PC-3 (cell line): ENCODE measurements at regions of chrX and their contacts with region 1.

Region 1: GRCh38 chrX:56729152-56729850 is at the start of gene NBDY:
- DNase-seq: peak; percentile 50
- ATAC-seq: peak; percentile 87
- H3K4me3 ChIP-seq: peak within 1 kb of the TSS; percentile 87
- H3K27ac ChIP-seq: peak within 1 kb of the TSS; percentile 45
- H3K4me1 ChIP-seq: peaks cover 5% of the 10 kb centered on the region; the same call in 1 of the 2 replicates
- H3K27me3 ChIP-seq: no peaks in the 10 kb centered on the region
- CTCF ChIP-seq: no peak
- total RNA-seq, gene NBDY: 9.7 and 13.6 TPM in 2 replicates

Region 2: GRCh38 chrX:55120767-55121358 is 1608.4 kb before region 1 on chrX:
- CTCF ChIA-PET with region 1: no interaction called
- POLR2A ChIA-PET with region 1: interaction called, 10 read pairs
- intact Hi-C with region 1: no loop called
- DNase-seq: no peak
- ATAC-seq: no peak
- H3K4me3 ChIP-seq: no peak overlapping the region
- H3K27ac ChIP-seq: no peak overlapping the region
- H3K4me1 ChIP-seq: no peaks in the 10 kb centered on the region
- H3K27me3 ChIP-seq: peaks cover 12% of the 10 kb centered on the region; the same call in 1 of the 2 replicates
- CTCF ChIP-seq: no peak

Region 3: DNA sequence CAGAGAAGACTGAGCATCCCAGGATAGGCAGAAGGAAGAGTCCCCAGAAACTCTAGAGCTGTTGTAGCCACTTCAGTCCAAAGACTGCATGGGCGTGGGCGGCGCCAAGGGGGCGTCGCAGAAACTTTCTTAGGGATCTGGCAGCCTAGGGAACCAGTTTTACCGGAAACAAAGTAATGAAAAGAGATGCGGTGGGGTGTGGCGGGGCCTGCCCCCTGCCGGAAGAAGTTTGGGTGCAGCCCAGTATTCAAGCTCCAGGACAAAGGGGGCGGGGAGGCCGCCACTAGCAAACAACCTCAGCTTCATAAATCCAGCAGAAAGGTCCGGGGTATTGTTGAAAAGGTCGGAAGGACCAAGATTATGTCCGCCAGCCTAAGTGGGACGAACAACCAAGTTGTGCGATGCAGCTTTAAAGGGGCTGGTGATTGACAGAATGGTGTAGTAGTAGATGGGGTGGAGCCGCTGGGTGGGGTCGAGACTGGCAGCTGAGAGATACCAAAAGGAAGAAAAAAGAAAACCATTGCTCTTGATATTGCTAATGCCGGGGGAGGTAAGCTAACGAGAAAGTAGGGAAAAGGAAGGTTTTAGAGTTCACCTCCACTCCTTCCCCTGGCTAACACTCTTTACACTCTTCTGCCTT is 821.2 kb before region 1 on chrX:
- CTCF ChIA-PET with region 1: no interaction called
- POLR2A ChIA-PET with region 1: no interaction called
- intact Hi-C with region 1: loop called (anchors 5 kb)
- DNase-seq: peak; percentile 77
- ATAC-seq: peak; percentile 66
- H3K4me3 ChIP-seq: peak overlapping the region; percentile 86
- H3K27ac ChIP-seq: peak overlapping the region; percentile 27
- H3K4me1 ChIP-seq: peaks cover 7% of the 10 kb centered on the region
- H3K27me3 ChIP-seq: no peaks in the 10 kb centered on the region
- CTCF ChIP-seq: peak; percentile 60

Region 4: GRCh38 chrX:56281789-56282188 is 447.5 kb before region 1 on chrX:
- CTCF ChIA-PET with region 1: interaction called, 13 read pairs
- POLR2A ChIA-PET with region 1: interaction called, 4 read pairs
- intact Hi-C with region 1: loop called (anchors 1 kb)
- DNase-seq: peak; percentile 54
- ATAC-seq: peak; percentile 57
- H3K4me3 ChIP-seq: no peak overlapping the region
- H3K27ac ChIP-seq: no peak overlapping the region
- H3K4me1 ChIP-seq: no peaks in the 10 kb centered on the region
- H3K27me3 ChIP-seq: peaks cover 14% of the 10 kb centered on the region; the same call in 1 of the 2 replicates
- CTCF ChIP-seq: peak; percentile 64

Region 5: GRCh38 chrX:56503941-56504662 is 225.2 kb before region 1 on chrX:
- CTCF ChIA-PET with region 1: no interaction called
- POLR2A ChIA-PET with region 1: interaction called, 4 read pairs
- intact Hi-C with region 1: loop called (anchors 10 kb)
- DNase-seq: peak; percentile 85
- ATAC-seq: peak; percentile 79
- H3K4me3 ChIP-seq: peak overlapping the region; percentile 23; the same call in 1 of the 2 replicates
- H3K27ac ChIP-seq: peak overlapping the region; percentile 98
- H3K4me1 ChIP-seq: peaks cover 50% of the 10 kb centered on the region
- H3K27me3 ChIP-seq: no peaks in the 10 kb centered on the region
- CTCF ChIP-seq: peak; percentile 44; the same call in 1 of the 2 replicates

Region 6: GRCh38 chrX:56788717-56789122 is 59.4 kb after region 1 on chrX:
- CTCF ChIA-PET with region 1: no interaction called
- POLR2A ChIA-PET with region 1: no interaction called
- intact Hi-C with region 1: no loop called
- DNase-seq: no peak
- ATAC-seq: no peak
- H3K4me3 ChIP-seq: no peak overlapping the region
- H3K27ac ChIP-seq: no peak overlapping the region
- H3K4me1 ChIP-seq: no peaks in the 10 kb centered on the region; the same call in 1 of the 2 replicates
- H3K27me3 ChIP-seq: no peaks in the 10 kb centered on the region
- CTCF ChIP-seq: no peak

Region 7: DNA sequence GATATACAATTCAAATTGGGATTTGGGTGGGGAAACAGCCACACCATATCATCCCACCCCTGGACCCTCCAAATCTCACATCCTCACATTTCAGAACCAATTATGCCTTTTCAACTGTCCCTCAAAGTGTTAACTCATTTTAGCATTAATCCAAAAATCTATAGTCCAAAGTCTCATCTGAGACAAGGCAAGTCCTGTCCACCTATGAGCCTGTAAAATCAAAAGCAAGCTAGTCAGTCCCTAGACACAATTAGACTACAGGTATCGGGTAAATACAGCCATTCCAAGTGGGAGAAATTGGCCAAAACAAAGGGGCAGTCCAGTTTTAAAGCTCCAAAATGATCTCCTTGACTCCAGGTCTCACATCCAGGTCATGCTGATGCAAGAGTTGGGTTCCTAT is 127.7 kb after region 1 on chrX:
- CTCF ChIA-PET with region 1: no interaction called
- POLR2A ChIA-PET with region 1: no interaction called
- intact Hi-C with region 1: no loop called
- DNase-seq: no peak
- ATAC-seq: no peak
- H3K4me3 ChIP-seq: no peak overlapping the region
- H3K27ac ChIP-seq: no peak overlapping the region
- H3K4me1 ChIP-seq: no peaks in the 10 kb centered on the region
- H3K27me3 ChIP-seq: no peaks in the 10 kb centered on the region
- CTCF ChIP-seq: no peak